Mammary epithelial cell (primary cell): ENCODE measurements at regions of chr5 and their contacts with region 1.

Region 1: DNA sequence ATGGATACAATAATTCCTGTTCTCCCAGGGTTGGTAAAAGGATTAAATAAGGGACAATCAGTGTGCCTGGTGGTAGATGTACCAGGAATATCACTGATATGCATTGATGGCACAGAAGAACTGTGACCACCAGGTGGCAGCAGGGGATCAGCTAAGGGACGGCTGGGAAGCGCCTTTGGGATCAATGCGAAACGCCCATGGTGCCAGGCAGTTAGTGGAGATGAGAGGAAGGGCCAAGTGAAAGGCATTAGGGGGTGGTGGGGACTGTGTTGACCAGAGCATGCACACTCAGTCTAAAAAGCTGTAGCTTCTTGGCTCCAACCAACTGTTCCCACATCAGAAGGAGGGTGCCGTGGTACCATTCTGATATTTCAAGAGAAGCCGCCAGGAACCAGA is 55.6 kb downstream of the ARHGEF37 start:
- DNase-seq: peak; percentile 56
- H3K4me3 ChIP-seq: no peak overlapping the region
- H3K27ac ChIP-seq: peak overlapping the region; percentile 97
- H3K4me1 ChIP-seq: peaks cover 49% of the 10 kb centered on the region
- H3K27me3 ChIP-seq: no peaks in the 10 kb centered on the region
- CTCF ChIP-seq: peak; percentile 78 to 85

Region 2: GRCh38 chr5:149442563-149443182 is 194.2 kb before region 1 on chr5:
- CTCF ChIA-PET with region 1: interaction called, 4 read pairs
- dilution Hi-C with region 1: no loop called
- in situ Hi-C with region 1: no loop called
- intact Hi-C with region 1: loop called (anchors 5 kb)
- DNase-seq: peak; percentile 80
- H3K4me3 ChIP-seq: no peak overlapping the region
- H3K27ac ChIP-seq: peak overlapping the region; percentile 89
- H3K4me1 ChIP-seq: peaks cover 70% of the 10 kb centered on the region
- H3K27me3 ChIP-seq: no peaks in the 10 kb centered on the region
- CTCF ChIP-seq: peak; percentile 91 to 94

Region 3: GRCh38 chr5:149667084-149667828 is 30.4 kb after region 1 on chr5:
- CTCF ChIA-PET with region 1: no interaction called
- dilution Hi-C with region 1: no loop called
- in situ Hi-C with region 1: no loop called
- intact Hi-C with region 1: no loop called
- DNase-seq: peak; percentile 19
- H3K4me3 ChIP-seq: no peak overlapping the region
- H3K27ac ChIP-seq: no peak overlapping the region
- H3K4me1 ChIP-seq: no peaks in the 10 kb centered on the region
- H3K27me3 ChIP-seq: no peaks in the 10 kb centered on the region
- CTCF ChIP-seq: peak; percentile 78 to 91

Region 4: DNA sequence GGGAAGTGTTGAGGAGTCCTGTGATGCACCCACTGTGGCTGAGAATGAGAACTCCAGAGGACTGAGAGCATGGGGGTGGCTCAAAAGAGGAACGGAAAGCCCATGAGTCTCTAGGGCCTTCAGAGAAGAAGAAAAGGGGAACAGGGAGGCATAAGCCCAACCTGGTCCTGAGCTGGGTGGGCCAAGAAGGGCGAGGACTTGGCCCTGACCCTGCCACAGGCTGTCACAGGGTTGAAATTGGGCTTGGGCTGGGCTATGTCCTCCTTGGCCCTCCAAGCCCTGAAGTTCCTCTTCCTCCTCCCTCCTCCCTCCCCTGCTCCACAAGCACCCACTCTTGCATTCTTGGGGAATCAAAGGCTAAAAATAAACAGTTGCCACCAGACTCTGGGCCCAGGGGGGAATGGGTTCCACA is 44.0 kb after region 1 on chr5:
- CTCF ChIA-PET with region 1: no interaction called
- dilution Hi-C with region 1: no loop called
- in situ Hi-C with region 1: no loop called
- intact Hi-C with region 1: no loop called
- DNase-seq: no peak
- H3K4me3 ChIP-seq: no peak overlapping the region
- H3K27ac ChIP-seq: no peak overlapping the region
- H3K4me1 ChIP-seq: no peaks in the 10 kb centered on the region
- H3K27me3 ChIP-seq: no peaks in the 10 kb centered on the region
- CTCF ChIP-seq: no peak

Region 5: DNA sequence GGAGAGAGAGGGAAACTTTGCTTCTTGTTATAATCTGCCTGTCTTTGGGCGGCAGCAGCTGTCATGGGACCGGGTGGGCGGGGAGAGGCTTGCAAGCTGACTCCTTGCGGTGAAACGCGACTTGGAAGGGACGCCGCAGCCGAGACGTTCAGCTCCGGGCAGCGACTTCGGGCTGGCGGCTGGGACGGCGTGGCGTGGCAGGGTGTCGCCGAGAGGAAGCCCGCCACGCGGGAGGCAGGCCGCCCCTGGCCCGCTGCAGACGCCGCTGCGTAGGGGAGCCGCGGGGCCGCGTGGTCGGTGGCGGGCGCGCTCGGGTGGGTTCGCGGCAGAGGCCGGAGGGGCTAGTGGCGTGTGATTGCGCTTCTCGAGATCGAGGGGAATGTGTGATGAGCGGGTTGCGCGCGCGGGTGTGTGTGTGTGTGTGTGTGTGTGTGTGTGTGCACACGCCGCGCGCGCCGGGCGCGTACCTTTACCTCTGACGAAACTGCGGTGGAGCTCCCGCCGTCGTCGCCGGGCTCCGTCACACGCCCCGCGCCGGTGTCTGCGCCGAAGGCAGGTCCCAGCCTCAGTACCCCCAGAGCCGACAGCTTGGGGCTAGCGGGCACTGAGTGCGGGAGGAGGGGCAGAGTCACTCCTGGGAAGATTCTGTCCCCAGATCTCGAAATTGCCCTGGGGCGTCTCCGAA is 94.9 kb after region 1 on chr5:
- CTCF ChIA-PET with region 1: no interaction called
- dilution Hi-C with region 1: no loop called
- in situ Hi-C with region 1: no loop called
- intact Hi-C with region 1: loop called (anchors 1 kb)
- DNase-seq: peak; percentile 84
- H3K4me3 ChIP-seq: peak overlapping the region; percentile 79 to 96 (median 86)
- H3K27ac ChIP-seq: peak overlapping the region; percentile 48
- H3K4me1 ChIP-seq: peaks cover 35% of the 10 kb centered on the region
- H3K27me3 ChIP-seq: no peaks in the 10 kb centered on the region
- CTCF ChIP-seq: no peak

Region 6: DNA sequence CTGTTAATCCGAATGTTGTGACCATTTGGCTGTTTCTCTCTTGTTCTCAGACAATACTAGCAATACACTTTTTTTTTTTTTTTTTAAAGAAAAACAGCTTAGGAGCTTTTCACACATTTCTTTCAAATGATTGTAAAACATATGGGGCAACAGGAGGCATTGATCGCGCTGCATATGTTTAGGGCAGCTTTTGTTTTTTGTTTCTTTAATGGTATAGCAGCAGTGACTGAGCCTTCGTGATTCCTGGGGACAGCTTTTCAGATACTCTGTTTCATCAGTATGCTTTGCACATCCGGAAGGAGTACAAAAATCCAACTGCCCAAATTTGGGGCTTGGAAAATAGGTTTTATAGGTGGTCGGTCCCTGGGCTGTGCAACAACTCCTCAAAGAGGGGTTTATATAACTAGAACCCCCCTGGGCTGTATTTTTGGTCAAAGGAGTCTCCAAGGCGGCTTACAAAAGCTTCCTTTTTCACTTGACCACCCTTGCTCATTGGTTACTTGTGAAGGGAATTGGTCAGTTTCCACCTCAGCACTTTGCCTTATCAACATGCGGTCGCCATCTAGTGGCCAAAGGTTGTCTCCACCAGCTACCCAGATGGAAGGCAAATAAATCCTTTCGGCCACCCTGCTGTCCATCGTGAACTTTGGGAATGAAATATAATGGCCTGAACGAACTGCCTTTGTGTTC is 215.9 kb after region 1 on chr5:
- CTCF ChIA-PET with region 1: no interaction called
- dilution Hi-C with region 1: no loop called
- in situ Hi-C with region 1: no loop called
- intact Hi-C with region 1: loop called (anchors 1 kb)
- DNase-seq: peak; percentile 49
- H3K4me3 ChIP-seq: no peak overlapping the region
- H3K27ac ChIP-seq: no peak overlapping the region
- H3K4me1 ChIP-seq: peaks cover 10% of the 10 kb centered on the region
- H3K27me3 ChIP-seq: no peaks in the 10 kb centered on the region
- CTCF ChIP-seq: peak; percentile 91 to 97

Region 7: GRCh38 chr5:149979896-149980295 is 343.0 kb after region 1 on chr5:
- CTCF ChIA-PET with region 1: no interaction called
- dilution Hi-C with region 1: no loop called
- in situ Hi-C with region 1: loop called in 1 of 2 experiments (anchors 10 kb)
- intact Hi-C with region 1: no loop called
- DNase-seq: no peak
- H3K4me3 ChIP-seq: no peak overlapping the region
- H3K27ac ChIP-seq: no peak overlapping the region
- H3K4me1 ChIP-seq: peaks cover 3% of the 10 kb centered on the region
- H3K27me3 ChIP-seq: no peaks in the 10 kb centered on the region
- CTCF ChIP-seq: no peak